ENCODE measurements at regions of chr7 and their contacts with region 1.

Region 1: DNA sequence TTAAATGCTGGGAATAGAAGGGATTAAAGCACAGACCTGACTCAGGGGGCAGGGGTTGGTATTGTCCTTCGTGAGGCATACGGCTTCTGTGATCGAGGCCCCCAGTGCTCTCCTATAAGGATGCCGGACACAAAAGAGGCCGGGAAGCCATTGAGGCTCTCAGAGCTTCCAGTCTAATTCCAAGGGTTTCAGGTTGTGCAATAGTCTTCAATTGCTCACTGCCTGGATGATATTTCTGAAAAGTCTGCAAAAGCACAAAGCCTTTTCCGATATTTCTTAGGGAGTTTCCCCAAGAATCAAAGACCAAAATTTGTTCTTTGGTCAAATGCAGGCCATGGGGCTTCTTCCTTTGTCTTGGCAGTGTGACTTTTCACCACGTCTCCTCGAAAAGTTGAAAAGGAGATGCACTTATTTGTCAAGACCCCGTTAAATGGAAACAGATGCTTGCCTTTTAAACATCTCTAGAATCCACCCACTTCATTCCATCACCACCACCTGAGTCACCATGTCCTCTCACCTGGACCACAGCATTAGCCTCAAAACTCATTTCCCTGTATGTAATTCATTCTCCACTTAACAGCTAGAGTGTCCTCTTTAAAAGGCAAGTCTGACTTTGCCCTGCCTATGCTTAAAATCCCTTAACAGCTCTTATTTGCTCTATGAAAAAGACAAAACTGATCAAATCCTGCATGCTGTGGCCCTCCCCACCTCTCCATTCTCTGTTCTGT is 134.8 kb upstream of the NAMPT start:
- DNase-seq: peak; percentile 75
- H3K4me3 Mint-ChIP-seq: no peak overlapping the region
- H3K27ac Mint-ChIP-seq: peak overlapping the region; percentile 76
- H3K4me1 Mint-ChIP-seq: peaks cover 76% of the 10 kb centered on the region
- H3K27me3 Mint-ChIP-seq: peaks cover 1% of the 10 kb centered on the region

Region 2: DNA sequence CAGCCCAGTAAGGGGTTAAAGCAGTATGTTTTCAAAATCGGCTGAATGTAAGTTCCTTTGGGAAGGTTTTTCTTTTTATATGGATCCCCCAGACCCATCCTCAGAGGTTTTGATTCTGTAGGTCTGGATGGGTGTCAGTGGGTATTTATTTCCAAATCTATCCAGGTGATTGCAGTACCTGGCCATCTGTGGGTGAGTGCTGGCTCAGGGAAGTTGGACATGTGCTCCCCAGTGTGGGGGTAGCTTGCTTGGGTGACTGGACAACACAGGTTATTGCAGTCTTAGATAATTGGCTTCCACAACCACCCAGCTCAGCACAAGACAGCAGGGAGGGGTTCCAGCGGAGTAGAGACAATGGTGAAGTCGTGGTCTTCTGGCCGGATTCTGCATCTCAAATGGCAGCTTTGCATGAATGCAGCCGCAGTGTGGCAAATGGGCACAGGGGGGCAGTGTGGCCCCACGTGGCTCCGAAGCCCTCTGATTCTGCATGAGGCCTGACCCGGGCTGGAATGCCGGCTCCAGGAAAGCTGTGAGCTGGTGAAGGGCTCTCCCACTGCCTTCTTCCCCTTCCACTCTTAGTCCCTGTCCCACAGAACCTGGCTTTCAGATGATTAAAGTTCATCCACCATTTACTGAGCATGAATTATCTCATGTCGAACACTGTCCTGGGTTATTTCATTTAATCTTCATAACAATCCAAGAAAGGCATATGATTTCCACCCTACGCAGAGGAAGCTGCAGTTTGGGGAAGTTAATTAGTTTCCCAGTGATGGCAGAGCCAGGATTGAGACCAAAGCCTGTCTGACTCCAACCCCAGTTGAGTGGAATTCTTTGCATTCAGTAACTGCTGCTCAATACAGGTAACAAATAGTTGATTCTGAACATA is 243.0 kb before region 1 on chr7:
- CTCF ChIA-PET with region 1: interaction called, 12 read pairs
- POLR2A ChIA-PET with region 1: no interaction called
- intact Hi-C with region 1: no loop called
- DNase-seq: peak; percentile 80
- H3K4me3 Mint-ChIP-seq: no peak overlapping the region
- H3K27ac Mint-ChIP-seq: no peak overlapping the region
- H3K4me1 Mint-ChIP-seq: peaks cover 5% of the 10 kb centered on the region
- H3K27me3 Mint-ChIP-seq: peaks cover 13% of the 10 kb centered on the region

Region 3: DNA sequence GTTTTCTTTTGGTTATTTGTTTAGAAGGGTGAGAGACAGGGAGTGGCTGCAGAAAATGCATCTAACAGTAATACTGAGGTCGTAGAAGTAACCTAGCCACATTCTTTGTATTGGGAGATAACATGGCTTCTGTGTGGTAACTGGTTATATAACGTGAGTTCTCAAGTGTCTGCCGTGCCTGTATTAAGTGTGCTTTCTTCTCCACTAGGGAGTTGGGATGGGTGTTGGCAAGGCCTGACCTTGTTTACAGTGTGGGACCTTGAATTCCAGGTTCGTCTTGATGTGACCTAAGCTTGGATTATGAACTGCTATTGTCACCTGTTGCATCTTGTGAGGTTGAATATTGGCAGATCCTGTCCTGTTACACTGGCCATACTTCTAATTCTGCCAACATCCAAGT is 10.5 kb after region 1 on chr7:
- CTCF ChIA-PET with region 1: no interaction called
- POLR2A ChIA-PET with region 1: no interaction called
- intact Hi-C with region 1: no loop called
- DNase-seq: no peak
- H3K4me3 Mint-ChIP-seq: no peak overlapping the region
- H3K27ac Mint-ChIP-seq: no peak overlapping the region
- H3K4me1 Mint-ChIP-seq: peaks cover 56% of the 10 kb centered on the region
- H3K27me3 Mint-ChIP-seq: peaks cover 2% of the 10 kb centered on the region

Region 4: DNA sequence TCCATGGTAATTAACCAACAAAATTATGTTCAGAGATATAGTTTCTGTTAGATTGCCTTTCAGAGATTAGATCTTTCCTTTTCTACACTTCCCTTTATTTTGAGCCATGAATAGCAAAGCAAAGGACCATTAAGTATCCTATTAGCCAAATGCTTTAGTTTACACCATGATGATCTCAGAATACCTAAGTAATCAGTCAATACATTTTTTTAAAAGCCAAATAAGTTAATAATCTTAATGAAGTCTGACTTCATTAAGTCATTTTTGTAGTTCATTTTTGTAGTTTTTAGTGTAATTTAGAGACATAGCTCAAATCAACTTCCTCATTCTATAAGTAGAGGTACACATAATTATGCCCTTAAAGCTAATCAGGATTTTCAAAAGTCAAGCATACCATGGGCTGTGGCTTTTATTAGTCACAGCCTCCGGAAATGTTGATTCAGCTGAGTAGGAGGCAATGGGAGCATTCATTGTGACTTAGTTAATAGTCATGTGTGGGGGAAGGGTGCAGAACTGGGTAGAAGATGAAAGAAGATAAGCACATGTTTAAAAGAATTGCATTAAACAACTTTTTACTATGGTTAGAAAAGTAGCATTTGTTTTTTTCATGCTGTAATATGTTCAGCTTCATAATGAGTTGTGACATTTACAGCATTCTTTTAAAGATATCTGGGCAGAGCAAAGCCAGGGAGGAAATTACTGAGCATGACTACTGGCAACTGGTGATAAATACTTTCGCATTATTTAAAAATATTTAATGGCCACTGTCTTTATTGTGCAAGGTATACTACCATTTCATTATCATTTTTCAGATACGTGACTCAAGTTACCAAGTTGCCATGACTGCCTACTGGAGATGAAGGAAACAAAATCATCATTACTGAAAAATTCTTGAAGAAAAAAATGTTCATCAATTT is 298.6 kb after region 1 on chr7:
- CTCF ChIA-PET with region 1: no interaction called
- POLR2A ChIA-PET with region 1: no interaction called
- intact Hi-C with region 1: loop called (anchors 1 kb)
- DNase-seq: peak; percentile 90
- H3K4me3 Mint-ChIP-seq: no peak overlapping the region
- H3K27ac Mint-ChIP-seq: no peak overlapping the region
- H3K4me1 Mint-ChIP-seq: peaks cover 12% of the 10 kb centered on the region
- H3K27me3 Mint-ChIP-seq: no peaks in the 10 kb centered on the region